Naive thymus-derived CD4-positive, alpha-beta T cell (primary cell): ENCODE measurements at regions of chr3 and their contacts with region 1.

Region 1: GRCh38 chr3:170307671-170308403 is 49.7 kb upstream of the SKIL start:
- DNase-seq: no peak
- ATAC-seq: no peak
- H3K4me3 ChIP-seq: no peak overlapping the region
- H3K4me3 Mint-ChIP-seq: no peak overlapping the region
- H3K27ac ChIP-seq: no peak overlapping the region
- H3K27ac Mint-ChIP-seq: no peak overlapping the region
- H3K4me1 ChIP-seq: no peaks in the 10 kb centered on the region
- H3K4me1 Mint-ChIP-seq: peaks cover 0 to 2% (median 0%) of the 10 kb centered on the region in 7 donors
- H3K27me3 ChIP-seq: no peaks in the 10 kb centered on the region
- H3K27me3 Mint-ChIP-seq: no peaks in the 10 kb centered on the region

Region 2: DNA sequence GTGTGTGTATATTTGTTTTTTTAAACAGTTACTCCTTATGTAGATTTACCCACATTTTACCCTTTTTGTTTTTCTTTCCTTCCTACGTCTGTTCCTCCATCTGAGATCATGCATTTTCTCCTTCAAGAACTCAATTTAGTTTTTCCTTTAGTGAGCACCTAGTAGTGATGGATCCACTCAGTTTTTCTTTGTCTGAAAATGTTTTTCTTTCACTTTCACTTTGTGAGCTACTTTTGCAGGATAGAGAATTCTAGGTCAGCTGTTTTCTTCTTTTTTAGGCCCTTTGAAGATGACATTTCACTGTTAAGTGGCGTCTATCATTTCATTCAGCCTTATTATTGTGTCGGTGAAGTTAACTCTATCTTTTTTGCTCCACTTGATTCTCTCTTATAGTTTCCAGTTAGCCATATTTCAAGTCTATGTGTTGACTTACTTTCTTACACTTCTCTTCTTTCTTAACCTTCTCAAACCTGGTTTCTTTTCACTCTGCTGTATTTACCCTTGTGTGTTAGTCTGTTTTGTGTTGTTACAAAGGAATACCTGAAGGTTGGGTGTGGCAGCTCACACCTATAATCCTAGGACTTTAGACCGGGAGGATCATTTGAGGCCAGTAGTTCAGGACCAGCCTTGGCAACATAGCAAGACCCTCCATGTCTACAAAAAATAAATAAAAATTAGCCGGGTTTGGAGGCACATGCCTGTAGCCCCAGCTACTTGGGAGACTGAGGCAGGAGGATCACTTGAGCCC is 29.8 kb before region 1 on chr3:
- CTCF ChIA-PET with region 1: no interaction called
- POLR2A ChIA-PET with region 1: no interaction called
- intact Hi-C with region 1: loop called in 1 of 2 experiments (anchors 2 kb)
- DNase-seq: peak in 6 of 9 donors; percentile 5 to 40 (median 22)
- ATAC-seq: peak; percentile 38
- H3K4me3 ChIP-seq: peak overlapping the region; percentile 39
- H3K4me3 Mint-ChIP-seq: peak overlapping the region; percentile 69 to 94 (median 81)
- H3K27ac ChIP-seq: no peak overlapping the region
- H3K27ac Mint-ChIP-seq: peak overlapping the region; percentile 41 to 94 (median 76)
- H3K4me1 ChIP-seq: peaks cover 5 to 6% of the 10 kb centered on the region in 2 donors
- H3K4me1 Mint-ChIP-seq: peaks cover 15 to 32% (median 23%) of the 10 kb centered on the region in 7 donors
- H3K27me3 ChIP-seq: no peaks in the 10 kb centered on the region
- H3K27me3 Mint-ChIP-seq: no peaks in the 10 kb centered on the region

Region 3: DNA sequence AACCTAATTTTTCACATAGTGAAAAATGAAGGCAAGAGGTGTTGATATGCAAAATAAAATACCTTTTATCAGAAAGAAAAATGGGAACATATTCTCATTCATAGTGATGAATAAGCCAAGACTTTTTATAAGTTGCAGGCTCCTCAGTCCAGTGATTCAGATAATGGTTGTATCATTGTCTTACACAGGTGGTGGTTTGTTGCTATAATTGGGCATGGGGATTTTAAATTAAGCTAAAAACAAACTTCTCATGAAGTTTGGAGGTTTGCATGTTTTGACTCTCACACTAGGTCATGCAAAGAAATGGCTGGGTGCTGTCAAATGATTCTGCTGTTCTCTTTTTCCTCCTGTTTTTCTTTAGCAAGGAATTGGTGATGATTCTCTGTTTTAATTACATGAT is 11.1 kb before region 1 on chr3:
- CTCF ChIA-PET with region 1: no interaction called
- POLR2A ChIA-PET with region 1: no interaction called
- intact Hi-C with region 1: no loop called
- DNase-seq: no peak
- ATAC-seq: no peak
- H3K4me3 ChIP-seq: no peak overlapping the region
- H3K4me3 Mint-ChIP-seq: no peak overlapping the region
- H3K27ac ChIP-seq: no peak overlapping the region
- H3K27ac Mint-ChIP-seq: no peak overlapping the region
- H3K4me1 ChIP-seq: no peaks in the 10 kb centered on the region
- H3K4me1 Mint-ChIP-seq: no peaks in the 10 kb centered on the region
- H3K27me3 ChIP-seq: no peaks in the 10 kb centered on the region
- H3K27me3 Mint-ChIP-seq: no peaks in the 10 kb centered on the region

Region 4: DNA sequence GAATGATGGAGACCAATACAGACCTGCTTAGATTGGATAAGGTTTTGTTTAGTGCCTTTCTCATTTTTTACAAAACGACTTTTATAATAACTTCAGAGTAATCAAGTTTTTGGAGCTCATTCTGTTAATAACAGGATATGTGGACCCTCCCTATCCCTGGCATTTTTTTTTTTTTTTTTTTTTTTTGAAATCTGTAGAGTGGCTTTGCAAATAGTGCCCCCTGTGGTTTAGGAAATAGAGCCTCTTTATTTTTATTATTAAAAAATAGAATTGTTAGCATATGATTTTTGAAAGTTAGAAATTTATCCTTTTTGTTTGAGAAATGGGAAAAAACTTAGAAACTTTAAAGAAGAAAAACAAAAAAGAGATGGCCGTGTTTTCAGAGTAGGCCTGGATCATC is 61.1 kb after region 1 on chr3:
- CTCF ChIA-PET with region 1: no interaction called
- POLR2A ChIA-PET with region 1: no interaction called
- intact Hi-C with region 1: loop called in 1 of 2 experiments (anchors 1 kb)
- DNase-seq: no peak
- ATAC-seq: peak; percentile 27
- H3K4me3 ChIP-seq: no peak overlapping the region
- H3K4me3 Mint-ChIP-seq: no peak overlapping the region
- H3K27ac ChIP-seq: no peak overlapping the region
- H3K27ac Mint-ChIP-seq: no peak overlapping the region
- H3K4me1 ChIP-seq: peaks cover 0 to 6% of the 10 kb centered on the region in 2 donors
- H3K4me1 Mint-ChIP-seq: peaks cover 9 to 59% (median 47%) of the 10 kb centered on the region in 7 donors
- H3K27me3 ChIP-seq: no peaks in the 10 kb centered on the region
- H3K27me3 Mint-ChIP-seq: no peaks in the 10 kb centered on the region

Region 5: GRCh38 chr3:170811928-170812591 is 504.2 kb after region 1 on chr3:
- CTCF ChIA-PET with region 1: interaction called, 5 read pairs
- POLR2A ChIA-PET with region 1: no interaction called
- intact Hi-C with region 1: loop called in 1 of 2 experiments (anchors 1 kb)
- DNase-seq: peak; percentile 17 to 77 (median 68)
- ATAC-seq: peak; percentile 92
- H3K4me3 ChIP-seq: no peak overlapping the region
- H3K4me3 Mint-ChIP-seq: no peak overlapping the region
- H3K27ac ChIP-seq: no peak overlapping the region
- H3K27ac Mint-ChIP-seq: no peak overlapping the region
- H3K4me1 ChIP-seq: no peaks in the 10 kb centered on the region
- H3K4me1 Mint-ChIP-seq: peaks cover 0 to 8% (median 0%) of the 10 kb centered on the region in 7 donors
- H3K27me3 ChIP-seq: no peaks in the 10 kb centered on the region
- H3K27me3 Mint-ChIP-seq: peaks cover 0 to 6% (median 0%) of the 10 kb centered on the region in 5 donors